CD14-positive monocyte (primary cell): ENCODE measurements at regions of chr15 and their contacts with region 1.

Region 1: DNA sequence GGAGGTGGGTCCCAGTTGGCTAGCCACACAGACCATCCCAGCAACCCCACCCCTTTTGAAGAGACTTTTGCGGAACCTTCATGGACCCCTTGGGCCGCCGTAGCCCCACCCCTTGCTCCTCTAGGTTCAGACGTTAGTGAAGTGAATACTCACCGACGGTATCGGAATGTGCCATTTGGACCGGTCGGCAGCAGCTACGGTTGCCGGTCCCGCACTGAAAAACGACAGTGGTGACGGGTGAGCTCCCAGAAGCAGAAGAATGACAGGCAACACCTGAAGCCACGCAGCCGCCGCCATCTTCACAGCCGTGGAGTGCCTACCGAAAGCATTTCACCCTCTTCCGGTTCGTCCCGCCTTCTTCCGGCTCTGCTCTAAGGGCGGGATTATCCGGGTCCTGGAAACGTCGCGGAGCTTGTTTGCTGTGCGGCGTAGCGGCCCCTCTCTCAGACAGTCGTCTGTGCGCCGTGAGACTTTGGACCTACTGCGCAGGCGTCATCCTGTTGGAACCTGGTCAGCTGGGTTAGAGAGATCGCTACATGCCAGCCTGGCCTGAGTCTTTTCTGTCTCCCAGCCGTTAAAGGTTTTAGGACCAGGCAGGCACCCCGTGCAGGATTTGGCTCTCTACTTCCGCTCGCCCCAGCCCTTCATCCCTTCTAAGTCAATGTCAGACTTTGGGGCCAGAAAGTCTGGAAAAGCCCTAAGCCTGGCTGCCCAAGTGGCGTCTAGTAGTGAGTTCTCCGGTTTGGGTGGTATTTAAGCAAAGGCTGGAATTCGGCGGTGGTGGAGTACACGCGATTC is at the starts of genes GANC and TMEM87A:
- DNase-seq: peak; percentile 96 to 97 (median 96)
- H3K4me3 ChIP-seq: peak within 1 kb of the TSS; percentile 78 to 93 (median 84)
- H3K4me3 Mint-ChIP-seq: peak within 1 kb of the TSS; percentile 96 to 99
- H3K27ac ChIP-seq: peak within 1 kb of the TSS; percentile 91 to 93
- H3K27ac Mint-ChIP-seq: peak within 1 kb of the TSS; percentile 97 to 99 (median 99)
- H3K4me1 ChIP-seq: peaks cover 30 to 48% of the 10 kb centered on the region in 2 donors
- H3K4me1 Mint-ChIP-seq: peaks cover 35% of the 10 kb centered on the region
- H3K27me3 ChIP-seq: no peaks in the 10 kb centered on the region
- H3K27me3 Mint-ChIP-seq: peaks cover 0 to 2% (median 0%) of the 10 kb centered on the region in 3 donors
- CTCF ChIP-seq: no peak
- polyA plus RNA-seq, gene GANC: 14.5 to 24.4 (median 21.1) TPM
- polyA plus RNA-seq, gene TMEM87A: 24.4 to 49.4 (median 39.3) TPM

Region 2: GRCh38 chr15:42474827-42475226 is 201.5 kb after region 1 on chr15:
- intact Hi-C with region 1: loop called in 1 of 2 experiments (anchors 10 kb)
- DNase-seq: peak in 2 of 3 donors; percentile 16 to 23
- H3K4me3 ChIP-seq: no peak overlapping the region
- H3K4me3 Mint-ChIP-seq: no peak overlapping the region
- H3K27ac ChIP-seq: peak overlapping the region in 1 of 2 donors; percentile 71
- H3K27ac Mint-ChIP-seq: peak overlapping the region in 5 of 7 donors; percentile 69 to 82 (median 75)
- H3K4me1 ChIP-seq: peaks cover 8 to 10% of the 10 kb centered on the region in 2 donors
- H3K4me1 Mint-ChIP-seq: peaks cover 18% of the 10 kb centered on the region
- H3K27me3 ChIP-seq: no peaks in the 10 kb centered on the region
- H3K27me3 Mint-ChIP-seq: no peaks in the 10 kb centered on the region
- CTCF ChIP-seq: no peak